Activated CD4-positive, alpha-beta T cell treated with anti-CD3 and anti-CD28 coated beads for 36 hours (primary cell): ENCODE measurements at regions of chr6 and their contacts with region 1.

Region 1: GRCh38 chr6:155264693-155265320 is 994 bp downstream of the CLDN20 start:
- DNase-seq: no peak
- ATAC-seq: peak; percentile 19
- H3K4me3 Mint-ChIP-seq: no peak overlapping the region
- H3K27ac Mint-ChIP-seq: peak overlapping the region; percentile 15
- H3K4me1 Mint-ChIP-seq: peaks cover 22% of the 10 kb centered on the region
- H3K27me3 Mint-ChIP-seq: no peaks in the 10 kb centered on the region

Region 2: DNA sequence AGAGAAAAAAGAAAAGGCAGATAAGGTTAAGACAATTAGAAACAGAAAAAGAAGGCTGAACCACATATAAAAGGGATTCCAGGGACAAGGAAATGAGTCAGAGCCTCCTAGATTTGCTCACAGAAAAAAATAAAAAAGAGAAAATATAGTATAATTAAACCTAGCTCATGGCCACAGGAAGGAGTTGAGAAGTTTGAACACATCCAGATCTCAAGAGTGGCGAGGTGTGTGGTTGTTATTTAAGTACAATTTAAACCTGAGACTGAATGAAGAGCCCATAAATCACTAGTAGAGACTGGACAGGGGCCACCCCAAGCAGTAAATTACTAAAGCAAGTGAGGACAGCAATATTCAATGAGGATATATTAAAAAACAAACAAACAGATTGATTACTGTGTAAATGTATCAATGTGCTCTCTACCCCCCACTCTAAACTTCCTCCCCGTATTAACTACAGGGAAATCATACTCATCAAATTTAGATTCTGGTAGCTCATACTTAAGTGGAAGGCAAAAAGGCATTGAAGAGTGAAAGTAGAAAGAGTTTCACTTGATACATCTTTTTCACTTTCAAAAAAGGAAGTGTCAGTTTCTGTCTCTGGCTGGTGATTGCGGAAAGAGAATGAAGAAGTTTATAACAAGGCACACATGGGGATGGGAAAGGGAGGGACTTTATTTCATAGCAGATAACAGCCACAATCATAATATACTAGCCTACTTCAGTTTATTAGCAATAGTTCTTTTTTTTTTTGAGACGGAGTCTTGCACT is 580.9 kb before region 1 on chr6:
- CTCF ChIA-PET with region 1: no interaction called
- POLR2A ChIA-PET with region 1: no interaction called
- intact Hi-C with region 1: loop called in 1 of 2 experiments (anchors 10 kb)
- DNase-seq: no peak
- ATAC-seq: peak; percentile 95
- H3K4me3 Mint-ChIP-seq: no peak overlapping the region
- H3K27ac Mint-ChIP-seq: peak overlapping the region; percentile 31
- H3K4me1 Mint-ChIP-seq: peaks cover 13% of the 10 kb centered on the region
- H3K27me3 Mint-ChIP-seq: no peaks in the 10 kb centered on the region

Region 3: GRCh38 chr6:156410649-156411048 is 1145.8 kb after region 1 on chr6:
- CTCF ChIA-PET with region 1: no interaction called
- POLR2A ChIA-PET with region 1: no interaction called
- intact Hi-C with region 1: no loop called
- DNase-seq: no peak
- ATAC-seq: no peak
- H3K4me3 Mint-ChIP-seq: no peak overlapping the region
- H3K27ac Mint-ChIP-seq: no peak overlapping the region
- H3K4me1 Mint-ChIP-seq: no peaks in the 10 kb centered on the region
- H3K27me3 Mint-ChIP-seq: no peaks in the 10 kb centered on the region